Activated CD4-positive, alpha-beta T cell treated with anti-CD3 and anti-CD28 coated beads, Interleukin-2, amount 10 ng/mL, durations not matched to agents 7 days and 5 days (primary cell): ENCODE measurements at regions of chr3 and their contacts with region 1.

Region 1: DNA sequence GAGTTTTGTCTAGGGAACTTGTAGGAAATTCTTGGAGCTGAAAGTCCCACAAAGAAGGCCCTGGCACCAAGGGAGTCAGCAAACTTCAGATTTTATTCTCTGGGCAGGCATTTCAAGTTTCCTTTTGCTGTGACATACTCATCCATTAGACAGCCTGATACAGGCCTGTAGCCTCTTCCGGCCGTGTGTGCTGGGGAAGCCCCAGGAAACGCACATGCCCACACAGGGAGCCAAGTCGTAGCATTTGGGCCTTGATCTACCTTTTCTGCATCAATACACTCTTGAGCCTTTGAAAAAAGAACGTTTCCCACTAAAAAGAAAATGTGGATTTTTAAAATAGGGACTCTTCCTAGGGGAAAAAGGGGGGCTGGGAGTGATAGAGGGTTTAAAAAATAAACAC is 15.0 kb downstream of the TIGIT start:
- DNase-seq: peak; percentile 39
- H3K4me3 Mint-ChIP-seq: peak overlapping the region; percentile 26
- H3K27ac Mint-ChIP-seq: peak overlapping the region; percentile 78
- H3K4me1 Mint-ChIP-seq: peaks cover 23% of the 10 kb centered on the region
- H3K27me3 Mint-ChIP-seq: peaks cover 2% of the 10 kb centered on the region

Region 2: DNA sequence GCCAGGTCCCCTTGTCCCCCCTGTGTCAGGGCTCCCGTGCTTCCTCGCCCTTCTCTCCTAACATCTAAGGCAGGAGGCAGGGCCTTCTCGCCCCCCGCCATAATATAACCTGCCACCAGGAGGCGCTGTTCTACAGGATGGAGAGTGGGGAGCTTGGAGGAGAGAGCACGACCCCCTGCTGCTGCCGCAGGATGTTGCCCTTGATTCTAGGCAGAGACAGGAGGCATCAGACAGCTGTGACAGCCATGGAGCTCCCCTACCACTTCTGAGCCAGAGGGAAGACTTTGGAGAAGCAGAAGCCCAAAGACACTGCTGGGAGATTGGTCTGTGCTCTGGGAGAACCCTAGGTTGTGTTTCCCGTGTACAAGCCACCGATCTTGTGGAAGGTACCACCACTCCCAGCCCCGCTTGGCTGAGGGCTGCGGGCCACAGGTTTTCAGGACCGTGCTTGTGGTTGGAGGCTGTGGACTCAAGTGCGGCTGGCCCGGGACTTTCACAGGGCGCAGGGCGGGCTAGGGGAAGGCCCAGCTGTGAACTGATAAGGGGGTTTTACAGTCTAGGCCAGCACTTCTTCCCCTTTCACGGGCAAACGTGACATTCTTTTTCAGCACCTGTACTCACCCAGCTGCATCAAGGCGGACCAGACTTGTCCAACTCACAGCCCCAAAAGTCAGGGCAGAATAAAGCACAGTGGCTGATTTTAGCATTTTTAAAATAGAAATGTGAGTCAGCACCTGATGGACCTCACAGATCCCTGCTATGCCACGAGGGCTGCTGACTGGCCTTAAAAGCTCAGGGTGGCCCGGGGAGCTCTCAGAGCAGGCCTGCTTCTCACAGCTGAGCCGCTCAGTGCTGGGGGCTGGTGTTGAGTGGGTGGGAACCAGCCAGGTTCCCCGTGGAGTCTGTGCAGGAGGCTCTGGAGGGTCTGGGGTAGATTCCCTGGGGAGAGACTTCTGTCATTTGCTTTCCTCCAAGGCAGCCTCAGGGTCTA is 17.6 kb before region 1 on chr3:
- CTCF ChIA-PET with region 1: interaction called, 11 read pairs
- POLR2A ChIA-PET with region 1: no interaction called
- DNase-seq: peak; percentile 81
- H3K4me3 Mint-ChIP-seq: peak overlapping the region; percentile 3
- H3K27ac Mint-ChIP-seq: peak overlapping the region; percentile 69
- H3K4me1 Mint-ChIP-seq: peaks cover 5% of the 10 kb centered on the region
- H3K27me3 Mint-ChIP-seq: no peaks in the 10 kb centered on the region

Region 3: DNA sequence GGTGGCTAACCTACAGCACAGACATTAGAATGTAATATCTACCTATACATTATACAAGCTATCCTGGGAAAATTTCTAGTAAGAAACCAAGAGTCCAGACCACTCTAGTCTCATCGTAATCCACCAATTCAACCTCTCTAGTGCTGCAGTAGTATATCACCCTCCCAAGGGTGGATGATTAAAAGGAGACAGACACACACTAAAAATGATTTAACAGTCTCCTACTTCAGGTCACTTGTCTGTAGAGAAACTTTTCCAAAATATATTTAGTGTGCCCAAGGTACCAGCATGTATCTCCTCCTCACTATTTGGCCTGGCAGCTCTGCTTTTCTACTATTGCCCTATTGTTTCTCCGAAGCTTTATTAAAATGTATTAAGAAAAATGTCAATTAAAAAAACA is 793.2 kb after region 1 on chr3:
- CTCF ChIA-PET with region 1: no interaction called
- POLR2A ChIA-PET with region 1: interaction called, 12 read pairs
- DNase-seq: no peak
- H3K4me3 Mint-ChIP-seq: no peak overlapping the region
- H3K27ac Mint-ChIP-seq: no peak overlapping the region
- H3K4me1 Mint-ChIP-seq: peaks cover 22% of the 10 kb centered on the region
- H3K27me3 Mint-ChIP-seq: no peaks in the 10 kb centered on the region